CD4-positive, alpha-beta memory T cell (primary cell): ENCODE measurements at regions of chr3 and their contacts with region 1.

Region 1: DNA sequence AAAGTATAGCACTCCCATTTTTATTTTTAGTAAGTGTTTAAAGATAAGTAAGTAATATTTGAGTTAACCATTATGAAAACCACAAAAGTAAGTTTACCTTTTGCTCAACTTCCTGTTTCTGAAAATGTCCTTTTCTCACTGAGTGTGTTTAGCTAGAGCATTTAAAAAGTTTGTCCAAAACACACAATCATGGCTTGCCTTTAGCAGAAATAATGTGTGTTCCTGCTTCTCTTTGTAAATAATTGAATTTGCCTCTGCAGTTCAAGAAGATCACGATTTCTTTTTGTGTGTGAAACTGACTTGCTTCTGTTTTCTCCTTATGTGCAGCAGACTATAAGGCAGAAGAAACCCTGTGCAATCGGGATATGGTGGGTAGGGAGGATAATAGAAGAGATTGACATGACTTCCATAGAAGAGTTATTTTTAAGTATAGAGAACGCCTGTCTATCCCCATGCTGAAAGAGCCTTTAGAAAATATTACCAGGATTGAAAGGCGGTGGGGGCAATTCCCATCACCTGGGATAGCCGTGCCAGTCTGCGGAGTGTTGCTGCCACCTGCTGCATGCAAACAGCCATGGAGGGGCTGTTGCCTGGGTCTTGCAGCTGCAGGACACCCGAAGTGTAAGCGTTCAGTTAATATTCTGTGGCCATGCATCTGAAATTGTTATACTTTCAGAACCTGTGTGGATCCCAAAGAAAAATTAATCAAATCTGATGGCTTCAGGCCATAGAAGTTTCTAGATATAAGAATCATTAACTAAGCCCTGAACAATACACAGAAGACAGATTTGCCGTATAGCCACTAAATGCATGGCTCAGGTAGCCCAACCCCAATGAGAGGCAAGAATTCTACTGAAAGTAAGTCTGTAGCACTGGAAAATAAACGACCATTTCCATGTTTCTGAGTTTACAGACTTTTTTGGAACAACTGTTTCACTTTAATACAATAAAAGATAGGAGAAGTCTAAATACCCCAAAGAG is 2.4 kb upstream of the CD96 start:
- DNase-seq: peak; percentile 51 to 67 (median 58)
- H3K4me3 ChIP-seq: peak overlapping the region; percentile 46 to 63
- H3K4me3 Mint-ChIP-seq: peak overlapping the region; percentile 65 to 87 (median 84)
- H3K27ac ChIP-seq: peak overlapping the region; percentile 33
- H3K27ac Mint-ChIP-seq: peak overlapping the region in 6 of 7 donors; percentile 51 to 96 (median 86)
- H3K4me1 ChIP-seq: peaks cover 51% of the 10 kb centered on the region
- H3K4me1 Mint-ChIP-seq: peaks cover 8 to 68% (median 41%) of the 10 kb centered on the region in 4 donors
- H3K27me3 ChIP-seq: no peaks in the 10 kb centered on the region
- H3K27me3 Mint-ChIP-seq: no peaks in the 10 kb centered on the region

Region 2: DNA sequence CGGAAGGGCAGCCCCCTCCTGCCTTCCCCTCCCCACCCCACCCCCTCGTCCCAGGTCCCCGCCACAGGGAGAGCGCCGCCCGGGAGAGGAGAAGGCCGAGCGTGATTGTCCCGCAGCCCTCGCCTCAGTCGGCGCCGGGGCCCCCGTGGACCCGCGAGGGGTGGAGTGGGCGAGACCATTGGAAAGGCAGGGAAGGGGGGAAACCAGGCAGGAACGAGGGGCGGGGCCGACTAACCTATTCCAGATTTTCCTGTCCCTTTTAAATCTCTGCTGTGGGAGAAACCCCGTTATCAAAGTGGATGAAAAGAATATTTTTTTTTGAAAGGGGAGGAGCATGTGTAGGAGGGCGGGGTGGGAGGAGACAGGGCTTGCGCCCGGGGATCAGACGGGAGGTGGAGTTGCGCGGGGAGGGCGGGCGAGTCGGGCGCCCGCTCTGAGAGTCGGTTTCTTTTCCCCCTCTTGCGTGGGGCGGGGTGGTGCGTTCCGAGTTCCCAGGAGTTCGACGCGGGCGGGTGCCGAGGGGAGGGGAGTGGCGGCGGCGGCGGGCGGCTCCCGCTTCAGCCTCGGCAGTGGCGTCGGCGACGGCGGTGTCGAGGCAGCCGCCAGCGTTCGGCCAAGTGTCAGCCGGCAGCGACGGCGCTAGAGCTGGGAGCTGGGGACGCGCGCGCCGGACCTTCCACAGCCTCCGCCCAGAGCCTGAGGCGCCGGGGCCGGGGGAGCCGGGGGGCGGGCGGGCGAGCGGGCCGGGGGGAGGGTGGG is 468.2 kb before region 1 on chr3 and contains the start of gene NECTIN3:
- CTCF ChIA-PET with region 1: interaction called, 4 read pairs
- POLR2A ChIA-PET with region 1: interaction called, 5 read pairs
- intact Hi-C with region 1: loop called (anchors 1 kb)
- DNase-seq: peak; percentile 84 to 92 (median 87)
- H3K4me3 ChIP-seq: peak within 1 kb of the TSS; percentile 78 to 82
- H3K4me3 Mint-ChIP-seq: peak within 1 kb of the TSS; percentile 93 to 97 (median 96)
- H3K27ac ChIP-seq: peak within 1 kb of the TSS; percentile 57
- H3K27ac Mint-ChIP-seq: peak within 1 kb of the TSS; percentile 90 to 95 (median 93)
- H3K4me1 ChIP-seq: peaks cover 32% of the 10 kb centered on the region
- H3K4me1 Mint-ChIP-seq: peaks cover 33 to 54% (median 44%) of the 10 kb centered on the region in 4 donors
- H3K27me3 ChIP-seq: no peaks in the 10 kb centered on the region
- H3K27me3 Mint-ChIP-seq: peaks cover 0 to 4% of the 10 kb centered on the region in 2 donors
- total RNA-seq, gene NECTIN3: 12.2 to 15.6 TPM

Region 3: GRCh38 chr3:111311709-111312235 is 227.9 kb before region 1 on chr3:
- CTCF ChIA-PET with region 1: interaction called, 3 read pairs
- POLR2A ChIA-PET with region 1: interaction called, 5 read pairs
- intact Hi-C with region 1: loop called (anchors 5 kb)
- DNase-seq: peak in 2 of 5 donors; percentile 7 to 19
- H3K4me3 ChIP-seq: no peak overlapping the region
- H3K4me3 Mint-ChIP-seq: peak overlapping the region; percentile 9 to 79 (median 61)
- H3K27ac ChIP-seq: peak overlapping the region; percentile 25
- H3K27ac Mint-ChIP-seq: peak overlapping the region; percentile 61 to 98 (median 93)
- H3K4me1 ChIP-seq: peaks cover 55% of the 10 kb centered on the region
- H3K4me1 Mint-ChIP-seq: peaks cover 32 to 40% (median 33%) of the 10 kb centered on the region in 4 donors
- H3K27me3 ChIP-seq: no peaks in the 10 kb centered on the region
- H3K27me3 Mint-ChIP-seq: no peaks in the 10 kb centered on the region

Region 4: DNA sequence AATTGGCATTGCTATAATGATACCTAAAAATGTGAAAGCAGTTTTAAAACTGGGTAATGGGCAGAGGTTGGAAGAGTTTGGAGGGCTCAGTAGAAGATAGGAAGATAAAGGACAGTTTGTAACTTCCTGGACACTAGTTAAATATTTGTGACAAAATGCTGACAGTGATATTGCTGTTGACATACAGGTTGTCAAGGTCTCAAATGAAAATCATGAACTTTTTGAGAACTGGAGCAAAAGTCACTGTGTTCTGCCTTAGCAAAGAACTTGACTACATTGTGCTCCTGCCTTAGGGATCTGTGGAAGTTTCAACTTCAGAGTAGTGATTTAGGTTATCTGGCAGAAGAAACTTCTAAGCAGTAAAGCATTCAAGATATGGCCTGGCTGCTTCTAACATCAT is 111.3 kb before region 1 on chr3:
- CTCF ChIA-PET with region 1: no interaction called
- POLR2A ChIA-PET with region 1: no interaction called
- intact Hi-C with region 1: no loop called
- DNase-seq: no peak
- H3K4me3 ChIP-seq: no peak overlapping the region
- H3K4me3 Mint-ChIP-seq: no peak overlapping the region
- H3K27ac ChIP-seq: no peak overlapping the region
- H3K27ac Mint-ChIP-seq: no peak overlapping the region
- H3K4me1 ChIP-seq: no peaks in the 10 kb centered on the region
- H3K4me1 Mint-ChIP-seq: no peaks in the 10 kb centered on the region
- H3K27me3 ChIP-seq: no peaks in the 10 kb centered on the region
- H3K27me3 Mint-ChIP-seq: no peaks in the 10 kb centered on the region

Region 5: GRCh38 chr3:111610189-111610588 is 70.5 kb after region 1 on chr3:
- CTCF ChIA-PET with region 1: interaction called, 19 read pairs
- POLR2A ChIA-PET with region 1: interaction called, 58 read pairs
- intact Hi-C with region 1: loop called (anchors 1 kb)
- DNase-seq: peak; percentile 82 to 90 (median 85)
- H3K4me3 ChIP-seq: peak overlapping the region in 1 of 2 donors; percentile 20
- H3K4me3 Mint-ChIP-seq: peak overlapping the region; percentile 4 to 87 (median 78)
- H3K27ac ChIP-seq: peak overlapping the region; percentile 65
- H3K27ac Mint-ChIP-seq: peak overlapping the region; percentile 91 to 99 (median 95)
- H3K4me1 ChIP-seq: peaks cover 55% of the 10 kb centered on the region
- H3K4me1 Mint-ChIP-seq: peaks cover 56 to 82% (median 67%) of the 10 kb centered on the region in 4 donors
- H3K27me3 ChIP-seq: no peaks in the 10 kb centered on the region
- H3K27me3 Mint-ChIP-seq: no peaks in the 10 kb centered on the region

Region 6: GRCh38 chr3:111650378-111651275 is 111.0 kb after region 1 on chr3:
- CTCF ChIA-PET with region 1: no interaction called
- POLR2A ChIA-PET with region 1: no interaction called
- intact Hi-C with region 1: no loop called
- DNase-seq: no peak
- H3K4me3 ChIP-seq: no peak overlapping the region
- H3K4me3 Mint-ChIP-seq: no peak overlapping the region
- H3K27ac ChIP-seq: no peak overlapping the region
- H3K27ac Mint-ChIP-seq: peak overlapping the region in 3 of 7 donors; percentile 38 to 60 (median 50)
- H3K4me1 ChIP-seq: no peaks in the 10 kb centered on the region
- H3K4me1 Mint-ChIP-seq: peaks cover 3 to 9% (median 7%) of the 10 kb centered on the region in 4 donors
- H3K27me3 ChIP-seq: no peaks in the 10 kb centered on the region
- H3K27me3 Mint-ChIP-seq: no peaks in the 10 kb centered on the region